ENCODE measurements at regions of chr17 and their contacts with region 1.

Region 1: DNA sequence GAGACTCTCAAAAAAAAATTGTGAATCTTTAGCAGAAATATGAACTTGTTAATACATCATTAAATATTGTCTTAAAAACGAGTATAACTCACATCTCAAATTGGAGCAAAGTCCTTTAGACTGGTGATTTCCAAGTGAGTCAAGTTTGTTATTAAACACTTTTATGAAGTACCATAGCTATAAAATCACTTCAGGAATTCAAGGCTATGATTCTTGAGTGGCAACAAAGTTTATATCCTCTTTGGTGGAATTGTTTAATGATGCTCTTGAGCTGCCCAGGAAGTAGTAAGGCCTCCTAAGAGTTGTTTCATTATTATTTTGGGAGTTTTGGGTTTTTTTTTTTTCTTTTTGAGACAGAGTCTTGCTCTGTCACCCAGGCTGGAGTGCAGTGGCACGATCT is 16.7 kb upstream of the BLMH start:
- DNase-seq: peak; percentile 14
- ATAC-seq: peak; percentile 68
- H3K4me3 ChIP-seq: no peak overlapping the region
- H3K27ac ChIP-seq: no peak overlapping the region
- H3K4me1 ChIP-seq: peaks cover 7% of the 10 kb centered on the region
- H3K27me3 ChIP-seq: no peaks in the 10 kb centered on the region
- CTCF ChIP-seq: no peak

Region 2: GRCh38 chr17:30326809-30327208 is 18.4 kb after region 1 on chr17:
- CTCF ChIA-PET with region 1: no interaction called
- POLR2A ChIA-PET with region 1: interaction called, 11 read pairs
- intact Hi-C with region 1: no loop called
- DNase-seq: no peak
- ATAC-seq: no peak
- H3K4me3 ChIP-seq: no peak overlapping the region
- H3K27ac ChIP-seq: no peak overlapping the region
- H3K4me1 ChIP-seq: peaks cover 5% of the 10 kb centered on the region; the same call in 1 of the 2 replicates
- H3K27me3 ChIP-seq: no peaks in the 10 kb centered on the region; the same call in 1 of the 2 replicates
- CTCF ChIP-seq: no peak